HepG2 (cell line): ENCODE measurements at regions of chr6 and their contacts with region 1.

Region 1: DNA sequence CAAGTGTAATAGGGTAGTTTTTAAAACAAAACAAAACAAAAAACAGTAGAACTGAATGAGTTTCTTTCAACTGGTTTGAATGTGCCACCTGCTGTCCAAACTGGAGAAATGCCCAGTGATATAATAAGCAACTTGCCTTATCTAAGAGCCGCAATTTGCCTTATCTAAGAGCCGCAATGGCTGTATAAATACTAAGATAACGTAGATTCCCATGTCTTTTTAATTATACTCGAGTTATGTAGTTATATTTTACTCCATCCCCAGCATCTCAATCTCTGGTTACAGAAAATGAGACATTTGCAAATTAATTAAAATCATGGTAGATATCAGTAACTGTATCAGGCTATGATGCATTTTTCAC is 67.2 kb downstream of the RPP40 start:
- DNase-seq: peak; percentile 59
- ATAC-seq: peak; percentile 70; the same call in 2 of the 3 replicates
- H3K4me3 ChIP-seq: no peak overlapping the region
- H3K27ac ChIP-seq: no peak overlapping the region
- H3K4me1 ChIP-seq: peaks cover 23% of the 10 kb centered on the region
- H3K27me3 ChIP-seq: no peaks in the 10 kb centered on the region
- CTCF ChIP-seq: peak; percentile 70
- EP300 ChIP-seq: no peak
- POLR2A ChIP-seq: no peak
- RAD21 ChIP-seq: peak; percentile 65; the same call in 1 of the 2 replicates

Region 2: DNA sequence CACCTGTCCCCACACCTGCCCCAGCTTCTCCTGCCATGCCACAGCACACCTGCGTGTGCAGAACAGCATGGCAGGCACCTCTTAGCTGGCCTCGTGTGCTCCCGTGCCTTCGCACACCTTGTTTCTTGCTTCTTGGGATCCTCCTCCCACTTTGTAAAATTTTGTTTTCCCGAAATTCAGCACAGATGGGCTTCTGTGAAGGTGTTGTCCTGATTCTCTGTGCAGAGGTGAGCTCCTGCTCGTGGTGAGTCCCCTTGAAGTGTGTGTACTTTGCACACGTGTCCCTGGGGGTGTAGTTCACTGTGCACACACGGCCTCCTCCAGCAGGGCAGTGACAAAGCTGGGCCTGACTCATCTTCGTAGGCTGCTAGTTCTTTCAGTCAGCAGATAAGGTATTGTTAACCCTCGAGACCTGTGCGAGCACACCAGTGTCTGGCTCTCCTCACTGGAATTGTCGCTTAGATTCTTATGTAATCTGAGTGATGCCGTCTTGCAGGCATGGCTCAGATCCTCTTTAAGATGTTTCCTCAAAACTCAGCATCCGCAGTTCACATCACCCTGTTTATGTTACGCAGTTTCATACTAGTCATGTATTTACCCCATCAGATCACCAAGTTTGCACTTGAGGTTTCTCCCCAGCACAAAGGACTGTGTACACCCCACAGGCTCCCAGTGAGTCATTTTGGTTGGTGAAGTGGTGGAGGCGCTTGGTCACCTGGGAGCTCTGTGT is 82.7 kb before region 1 on chr6:
- CTCF ChIA-PET with region 1: no interaction called
- POLR2A ChIA-PET with region 1: no interaction called
- in situ Hi-C with region 1: no loop called
- intact Hi-C with region 1: loop called (anchors 5 kb)
- DNase-seq: peak; percentile 73
- ATAC-seq: peak; percentile 93
- H3K4me3 ChIP-seq: no peak overlapping the region
- H3K27ac ChIP-seq: no peak overlapping the region
- H3K4me1 ChIP-seq: peaks cover 16% of the 10 kb centered on the region
- H3K27me3 ChIP-seq: no peaks in the 10 kb centered on the region
- CTCF ChIP-seq: no peak
- EP300 ChIP-seq: no peak
- POLR2A ChIP-seq: no peak
- RAD21 ChIP-seq: no peak; the same call in 1 of the 2 replicates